Activated CD4-positive, alpha-beta memory T cell treated with anti-CD3 and anti-CD28 coated beads, Interleukin-2, amount 10 ng/mL, durations not matched to agents 7 days and 5 days (primary cell): ENCODE measurements at regions of chr2 and their contacts with region 1.

Region 1: GRCh38 chr2:25165992-25166875 is 2.1 kb downstream of the POMC start:
- DNase-seq: peak; percentile 52
- H3K4me3 Mint-ChIP-seq: no peak overlapping the region
- H3K27ac Mint-ChIP-seq: no peak overlapping the region
- H3K4me1 Mint-ChIP-seq: peaks cover 25% of the 10 kb centered on the region
- H3K27me3 Mint-ChIP-seq: peaks cover 63% of the 10 kb centered on the region

Region 2: GRCh38 chr2:25098670-25099486 is 67.4 kb before region 1 on chr2:
- CTCF ChIA-PET with region 1: no interaction called
- POLR2A ChIA-PET with region 1: no interaction called
- DNase-seq: no peak
- H3K4me3 Mint-ChIP-seq: no peak overlapping the region
- H3K27ac Mint-ChIP-seq: no peak overlapping the region
- H3K4me1 Mint-ChIP-seq: peaks cover 1% of the 10 kb centered on the region
- H3K27me3 Mint-ChIP-seq: peaks cover 12% of the 10 kb centered on the region

Region 3: GRCh38 chr2:25197336-25198208 is 31.3 kb after region 1 on chr2:
- CTCF ChIA-PET with region 1: interaction called, 33 read pairs
- POLR2A ChIA-PET with region 1: interaction called, 3 read pairs
- DNase-seq: no peak
- H3K4me3 Mint-ChIP-seq: no peak overlapping the region
- H3K27ac Mint-ChIP-seq: no peak overlapping the region
- H3K4me1 Mint-ChIP-seq: peaks cover 6% of the 10 kb centered on the region
- H3K27me3 Mint-ChIP-seq: peaks cover 12% of the 10 kb centered on the region